ENCODE measurements at regions of chrX and their contacts with region 1.

Region 1: GRCh38 chrX:14095702-14096101 is 66.0 kb upstream of the GEMIN8 start:
- DNase-seq: peak; percentile 34
- CTCF ChIP-seq: peak; percentile 72

Region 2: DNA sequence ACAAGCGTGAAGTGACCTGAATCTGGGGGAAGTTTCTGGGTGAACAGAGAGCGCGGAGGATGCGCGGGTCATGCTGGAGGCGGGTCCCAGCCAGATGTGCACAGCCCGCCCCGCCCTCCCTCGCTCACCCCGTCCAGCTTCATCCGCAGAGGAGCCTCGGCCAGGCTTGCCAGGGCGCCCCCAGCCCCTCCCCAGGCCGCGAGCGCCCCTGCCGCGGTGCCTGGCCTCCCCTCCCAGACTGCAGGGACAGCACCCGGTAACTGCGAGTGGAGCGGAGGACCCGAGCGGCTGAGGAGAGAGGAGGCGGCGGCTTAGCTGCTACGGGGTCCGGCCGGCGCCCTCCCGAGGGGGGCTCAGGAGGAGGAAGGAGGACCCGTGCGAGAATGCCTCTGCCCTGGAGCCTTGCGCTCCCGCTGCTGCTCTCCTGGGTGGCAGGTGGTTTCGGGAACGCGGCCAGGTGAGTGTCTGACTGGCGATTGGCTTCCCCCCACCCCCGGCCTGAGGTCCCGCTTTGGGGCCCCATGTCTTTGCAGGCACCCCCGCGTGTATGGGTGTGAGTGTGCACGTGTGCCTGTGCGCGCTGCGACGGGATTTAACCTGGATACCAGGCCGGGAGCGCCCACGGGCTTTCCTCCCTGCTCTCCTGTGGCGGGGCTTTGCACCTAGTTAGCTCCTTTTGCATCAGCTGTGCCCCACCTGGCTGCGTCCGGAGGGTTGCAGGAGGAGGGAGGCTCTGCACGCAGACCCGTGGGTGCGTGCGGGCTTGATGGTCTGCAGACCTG is 526.0 kb before region 1 on chrX and contains the start of gene EGFL6:
- in situ Hi-C with region 1: no loop called
- DNase-seq: peak; percentile 17
- CTCF ChIP-seq: no peak

Region 3: GRCh38 chrX:13851996-13852695 is 243.6 kb before region 1 on chrX:
- in situ Hi-C with region 1: no loop called
- DNase-seq: peak; percentile 40
- CTCF ChIP-seq: peak; percentile 32

Region 4: DNA sequence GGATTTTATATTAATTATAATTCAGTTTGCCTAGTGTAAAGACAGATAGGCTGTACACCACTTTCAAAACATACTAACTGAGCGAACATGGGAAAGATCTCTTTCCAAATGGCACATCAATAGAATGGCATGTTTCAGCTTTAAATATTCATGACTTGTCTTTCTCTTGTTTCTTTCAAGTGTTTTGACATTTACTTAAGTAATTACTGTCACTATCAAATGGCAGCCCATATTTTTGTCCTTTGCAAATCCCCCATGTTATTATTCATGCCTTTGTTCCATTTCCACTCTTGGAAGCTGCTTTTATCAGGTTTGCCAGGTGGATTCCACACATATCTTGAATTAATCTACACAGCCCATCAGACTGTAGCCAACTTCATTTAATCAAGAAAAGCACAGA is 344.4 kb after region 1 on chrX:
- in situ Hi-C with region 1: no loop called
- DNase-seq: no peak
- CTCF ChIP-seq: no peak

Region 5: DNA sequence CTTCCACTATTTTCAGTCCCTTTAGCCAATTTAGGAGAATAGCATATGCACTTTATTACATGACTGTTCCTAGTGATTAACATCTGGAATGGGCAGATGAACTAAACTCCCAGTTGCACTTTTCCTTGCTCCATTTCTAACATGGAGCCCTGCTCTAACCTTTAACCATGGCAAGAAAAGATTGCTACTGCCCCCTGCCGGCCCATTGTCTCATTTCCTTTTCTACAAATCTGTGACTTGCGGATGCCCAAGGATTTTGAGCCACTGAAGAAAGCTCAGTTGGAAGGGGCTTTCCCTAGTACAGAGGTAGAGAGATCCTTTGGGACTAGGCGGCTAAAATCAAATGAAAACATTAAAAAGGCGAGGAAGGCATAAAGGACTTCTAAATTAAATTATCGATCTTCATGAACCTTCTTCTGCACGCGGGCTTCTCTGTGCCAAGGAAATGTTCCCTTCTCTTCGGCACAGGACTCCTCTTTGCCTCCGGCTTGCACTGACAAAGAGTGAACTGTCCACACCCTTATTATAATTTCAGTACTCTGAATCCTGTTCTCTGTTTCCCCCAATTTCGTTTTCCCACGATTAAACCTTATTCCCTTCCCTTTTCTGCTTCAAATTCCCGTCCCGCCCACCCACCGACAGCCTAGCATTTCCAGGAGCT is 433.1 kb after region 1 on chrX:
- in situ Hi-C with region 1: loop called (anchors 25 kb)
- DNase-seq: peak; percentile 21
- CTCF ChIP-seq: peak; percentile 62

Region 6: GRCh38 chrX:15143050-15143824 is 1047.5 kb after region 1 on chrX:
- in situ Hi-C with region 1: loop called (anchors 25 kb)
- DNase-seq: peak; percentile 37
- CTCF ChIP-seq: peak; percentile 87

Measured in GM13977 (cell line).